ENCODE measurements at regions of chr7 and their contacts with region 1.

Region 1: DNA sequence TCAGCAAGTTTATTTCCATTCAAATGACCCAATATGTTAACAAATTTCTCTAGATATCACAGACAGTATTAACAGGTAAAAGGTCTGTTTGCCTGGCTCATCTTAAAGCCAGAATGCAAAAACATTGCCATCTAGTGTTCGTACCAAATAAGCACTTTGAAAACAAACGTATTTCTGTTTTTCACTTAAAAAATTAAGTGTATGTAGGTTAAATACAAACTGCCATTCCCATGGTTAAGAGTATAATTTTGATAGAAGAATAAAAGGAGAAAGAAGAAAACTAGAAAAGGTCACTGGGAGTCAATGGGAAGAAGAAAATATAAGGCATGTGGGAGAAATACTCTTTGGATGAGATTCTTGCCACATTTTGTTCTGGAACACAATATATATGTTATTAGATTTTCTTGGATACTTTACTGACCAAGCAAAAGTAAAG is 51.0 kb downstream of the ORC5 start:
- DNase-seq: peak; percentile 22
- H3K4me3 Mint-ChIP-seq: no peak overlapping the region
- H3K27ac Mint-ChIP-seq: no peak overlapping the region
- H3K4me1 Mint-ChIP-seq: no peaks in the 10 kb centered on the region
- H3K27me3 Mint-ChIP-seq: no peaks in the 10 kb centered on the region
- CTCF ChIP-seq: peak; percentile 43

Region 2: GRCh38 chr7:103524042-103524907 is 632.6 kb before region 1 on chr7:
- CTCF ChIA-PET with region 1: interaction called, 4 read pairs
- POLR2A ChIA-PET with region 1: no interaction called
- intact Hi-C with region 1: loop called (anchors 1 kb)
- DNase-seq: peak; percentile 30
- H3K4me3 Mint-ChIP-seq: no peak overlapping the region
- H3K27ac Mint-ChIP-seq: no peak overlapping the region
- H3K4me1 Mint-ChIP-seq: peaks cover 4% of the 10 kb centered on the region
- H3K27me3 Mint-ChIP-seq: peaks cover 47% of the 10 kb centered on the region
- CTCF ChIP-seq: peak; percentile 30

Region 3: DNA sequence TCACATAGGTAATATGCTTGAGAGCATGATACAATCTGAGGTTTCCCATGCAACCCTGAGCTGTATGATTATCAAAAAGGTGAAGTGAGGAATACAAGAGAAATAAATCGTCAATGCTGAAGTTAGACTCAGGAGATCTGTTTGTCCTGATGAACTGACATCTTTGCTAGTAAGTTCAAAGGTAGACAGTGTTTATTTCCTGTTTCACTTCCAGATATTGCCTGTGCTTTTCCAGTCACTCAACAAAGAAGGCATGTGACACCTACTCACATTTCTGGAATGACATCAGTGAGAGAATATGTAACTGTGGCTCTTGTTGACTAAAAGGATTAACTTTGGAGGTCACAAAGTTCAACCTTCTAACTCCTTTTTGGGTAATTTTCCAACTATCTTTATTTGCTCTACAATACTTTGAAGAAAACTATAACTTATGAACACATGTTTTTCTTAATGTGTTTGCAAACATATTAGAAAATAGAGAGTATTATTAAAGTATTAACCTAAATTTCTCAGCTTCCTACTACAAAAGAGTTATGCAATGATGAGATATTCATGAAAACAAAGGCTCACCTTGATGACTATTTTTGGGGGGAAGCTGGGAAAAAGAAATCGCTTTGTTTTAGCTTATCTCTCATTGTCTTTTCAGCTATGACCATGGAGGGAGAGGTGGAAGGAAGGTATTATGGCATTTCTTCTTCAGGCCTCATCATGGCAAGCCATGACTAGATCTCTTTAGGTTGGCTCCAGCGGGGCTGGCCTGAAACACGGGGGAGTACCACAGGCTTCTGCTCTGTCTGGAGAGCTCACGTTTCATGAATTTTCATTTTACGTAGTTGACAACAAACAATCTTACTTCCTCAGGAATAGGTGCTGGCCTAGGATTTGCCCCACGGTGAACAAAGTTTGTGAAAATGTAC is 496.1 kb before region 1 on chr7:
- CTCF ChIA-PET with region 1: no interaction called
- POLR2A ChIA-PET with region 1: no interaction called
- intact Hi-C with region 1: loop called (anchors 10 kb)
- DNase-seq: peak; percentile 6
- H3K4me3 Mint-ChIP-seq: no peak overlapping the region
- H3K27ac Mint-ChIP-seq: no peak overlapping the region
- H3K4me1 Mint-ChIP-seq: no peaks in the 10 kb centered on the region
- H3K27me3 Mint-ChIP-seq: peaks cover 38% of the 10 kb centered on the region
- CTCF ChIP-seq: no peak

Region 4: DNA sequence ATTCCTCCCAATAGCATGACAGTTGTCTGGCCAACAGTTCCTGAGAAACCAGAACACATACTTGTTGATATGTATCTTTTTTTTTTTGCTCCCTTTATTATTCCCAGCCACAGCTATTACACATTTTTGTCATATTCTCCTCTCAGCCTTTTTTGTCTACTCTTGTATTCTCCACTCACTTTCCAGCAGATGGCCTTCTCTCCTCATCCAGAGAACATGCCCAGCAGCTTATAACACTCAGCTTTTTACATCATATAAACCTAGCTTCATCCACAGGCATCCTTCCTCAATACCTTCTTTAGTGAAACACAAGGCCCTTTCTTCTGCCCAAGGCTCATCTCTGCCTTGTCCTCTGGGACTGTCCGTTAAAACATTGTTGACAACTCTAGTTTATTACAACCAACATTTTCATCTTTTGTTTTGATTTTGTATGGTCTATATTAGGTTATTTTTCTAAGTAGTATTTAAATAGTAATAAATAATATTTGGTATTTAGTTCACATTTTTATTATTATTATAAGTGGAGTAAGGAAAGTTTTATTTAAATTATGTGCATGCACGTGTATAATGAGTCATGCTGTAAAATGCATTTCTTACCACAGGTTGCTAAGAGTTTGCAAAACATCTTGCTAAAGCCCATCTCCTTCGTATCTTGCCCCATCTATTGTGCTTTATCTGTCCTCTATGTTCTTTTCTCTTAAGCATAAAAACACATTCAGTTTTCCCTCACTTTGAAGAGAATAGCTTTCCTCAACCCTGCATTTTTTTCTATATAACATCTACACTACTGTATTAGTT is 50.6 kb before region 1 on chr7:
- CTCF ChIA-PET with region 1: interaction called, 4 read pairs
- POLR2A ChIA-PET with region 1: no interaction called
- intact Hi-C with region 1: loop called (anchors 1 kb)
- DNase-seq: peak; percentile 17
- H3K4me3 Mint-ChIP-seq: no peak overlapping the region
- H3K27ac Mint-ChIP-seq: no peak overlapping the region
- H3K4me1 Mint-ChIP-seq: no peaks in the 10 kb centered on the region
- H3K27me3 Mint-ChIP-seq: peaks cover 51% of the 10 kb centered on the region
- CTCF ChIP-seq: no peak

Region 5: DNA sequence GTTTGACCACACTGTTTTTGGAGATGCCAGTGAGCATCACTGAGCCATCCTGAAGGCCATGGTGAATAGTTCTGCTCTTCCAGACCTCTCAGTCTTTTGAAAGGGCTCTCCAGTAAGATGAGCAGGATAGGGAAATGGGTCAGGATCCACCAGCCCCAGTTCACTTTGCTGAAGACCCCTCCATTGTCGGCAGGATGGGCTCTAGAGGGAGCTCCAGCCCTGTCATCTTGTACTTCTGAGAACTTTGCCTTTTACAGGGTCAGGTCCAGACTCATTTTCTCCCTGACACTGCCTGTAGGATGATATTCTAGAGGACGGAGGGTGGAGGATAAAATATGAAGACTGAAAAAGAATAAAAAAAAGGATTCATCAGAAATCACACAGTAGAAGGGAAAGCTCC is 184.7 kb after region 1 on chr7:
- CTCF ChIA-PET with region 1: no interaction called
- POLR2A ChIA-PET with region 1: no interaction called
- intact Hi-C with region 1: no loop called
- DNase-seq: peak; percentile 21
- H3K4me3 Mint-ChIP-seq: no peak overlapping the region
- H3K27ac Mint-ChIP-seq: no peak overlapping the region
- H3K4me1 Mint-ChIP-seq: no peaks in the 10 kb centered on the region
- H3K27me3 Mint-ChIP-seq: peaks cover 1% of the 10 kb centered on the region
- CTCF ChIP-seq: no peak

Region 6: GRCh38 chr7:104352736-104353135 is 195.9 kb after region 1 on chr7:
- CTCF ChIA-PET with region 1: no interaction called
- POLR2A ChIA-PET with region 1: no interaction called
- intact Hi-C with region 1: no loop called
- DNase-seq: no peak
- H3K4me3 Mint-ChIP-seq: no peak overlapping the region
- H3K27ac Mint-ChIP-seq: no peak overlapping the region
- H3K4me1 Mint-ChIP-seq: no peaks in the 10 kb centered on the region
- H3K27me3 Mint-ChIP-seq: peaks cover 55% of the 10 kb centered on the region
- CTCF ChIP-seq: no peak

Region 7: GRCh38 chr7:104453190-104453589 is 296.3 kb after region 1 on chr7:
- CTCF ChIA-PET with region 1: no interaction called
- POLR2A ChIA-PET with region 1: no interaction called
- intact Hi-C with region 1: no loop called
- DNase-seq: no peak
- H3K4me3 Mint-ChIP-seq: no peak overlapping the region
- H3K27ac Mint-ChIP-seq: no peak overlapping the region
- H3K4me1 Mint-ChIP-seq: no peaks in the 10 kb centered on the region
- H3K27me3 Mint-ChIP-seq: peaks cover 10% of the 10 kb centered on the region
- CTCF ChIP-seq: no peak

Measured in MCF 10A (cell line).